Body of pancreas (tissue), 4 donors: ENCODE measurements at regions of chr17 and their contacts with region 1.

Region 1: DNA sequence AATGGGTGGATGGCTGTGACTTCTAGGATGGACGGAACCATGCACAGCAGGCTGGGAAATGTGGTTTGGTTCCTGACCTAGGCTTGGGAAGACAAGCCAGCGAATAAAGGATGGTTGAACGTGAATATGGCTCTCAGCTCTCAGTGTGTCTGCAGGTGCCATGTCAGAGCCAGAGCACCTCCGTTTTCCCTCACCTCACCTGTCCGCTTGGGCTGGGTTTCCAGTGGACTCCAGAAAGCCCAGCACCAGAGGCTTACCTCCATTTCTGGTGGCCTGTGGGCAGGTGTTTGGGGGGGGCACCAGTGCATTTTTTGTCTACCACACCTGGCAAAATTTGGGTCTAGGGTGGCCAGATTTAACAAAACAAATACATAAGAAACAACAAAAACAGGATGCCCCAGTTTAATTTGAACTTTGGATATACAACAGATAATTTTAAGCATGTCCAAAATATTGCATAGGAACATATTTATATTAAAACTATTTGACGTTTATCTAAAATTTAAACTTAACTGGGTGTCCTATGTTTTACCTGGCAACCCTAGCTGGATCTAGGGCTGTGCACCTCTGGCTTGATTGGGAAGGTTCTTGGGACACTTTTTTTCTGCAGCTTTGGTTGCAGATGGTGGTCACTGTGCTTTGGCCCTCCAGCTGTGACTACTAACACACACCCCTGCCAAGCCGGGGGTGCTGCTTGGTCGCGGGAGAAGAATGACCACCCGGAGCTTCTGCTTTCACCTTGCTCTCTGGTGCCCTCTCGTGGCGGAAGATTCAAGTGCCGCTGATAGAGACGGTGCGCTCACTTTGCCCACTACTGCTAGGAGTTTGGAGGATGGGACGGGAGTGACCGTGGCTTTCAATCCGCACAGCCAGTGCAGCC is 6.3 kb downstream of the SPACA3 start:
- DNase-seq: peak; percentile 81 to 88 (median 84)
- ATAC-seq: peak; percentile 78
- H3K4me3 ChIP-seq: no peak overlapping the region
- H3K27ac ChIP-seq: no peak overlapping the region
- H3K4me1 ChIP-seq: peaks cover 16% of the 10 kb centered on the region
- H3K27me3 ChIP-seq: no peaks in the 10 kb centered on the region
- CTCF ChIP-seq: peak; percentile 80 to 92 (median 87)
- POLR2A ChIP-seq: no peak

Region 2: DNA sequence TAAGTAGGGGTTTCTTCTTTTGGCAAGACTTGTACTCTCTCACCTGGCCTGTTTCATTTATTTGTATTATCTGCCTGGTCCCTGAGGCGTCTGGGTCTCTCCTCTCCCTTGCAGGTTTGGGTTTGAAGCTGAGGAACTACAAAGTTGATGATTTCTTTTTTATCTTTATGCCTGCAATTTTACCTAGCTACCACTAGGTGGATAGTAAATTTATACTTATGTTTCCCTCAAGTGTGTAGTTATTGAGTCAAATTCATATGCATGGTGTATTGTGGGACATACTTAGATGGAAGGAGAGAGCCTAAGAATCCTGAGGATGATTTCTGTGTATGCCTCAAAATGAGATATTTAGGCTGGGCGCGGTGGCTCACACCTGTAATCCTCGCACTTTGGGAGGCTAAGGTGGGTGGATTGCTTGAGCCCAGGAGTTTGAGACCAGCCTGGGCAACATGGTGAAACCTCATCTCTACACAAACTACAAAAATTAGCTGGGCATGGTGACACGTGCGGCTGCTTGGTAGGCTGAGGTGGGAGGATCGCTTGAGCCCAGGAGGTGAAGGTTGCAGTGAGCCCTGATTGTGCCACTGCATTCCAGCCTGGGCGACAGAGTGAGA is 56.5 kb before region 1 on chr17:
- intact Hi-C with region 1: loop called (anchors 10 kb)
- DNase-seq: no peak
- ATAC-seq: no peak
- H3K4me3 ChIP-seq: no peak overlapping the region
- H3K27ac ChIP-seq: no peak overlapping the region
- H3K4me1 ChIP-seq: peaks cover 37% of the 10 kb centered on the region
- H3K27me3 ChIP-seq: no peaks in the 10 kb centered on the region
- CTCF ChIP-seq: peak in 6 of 7 experiments; percentile 30 to 57 (median 45)
- POLR2A ChIP-seq: no peak

Region 3: DNA sequence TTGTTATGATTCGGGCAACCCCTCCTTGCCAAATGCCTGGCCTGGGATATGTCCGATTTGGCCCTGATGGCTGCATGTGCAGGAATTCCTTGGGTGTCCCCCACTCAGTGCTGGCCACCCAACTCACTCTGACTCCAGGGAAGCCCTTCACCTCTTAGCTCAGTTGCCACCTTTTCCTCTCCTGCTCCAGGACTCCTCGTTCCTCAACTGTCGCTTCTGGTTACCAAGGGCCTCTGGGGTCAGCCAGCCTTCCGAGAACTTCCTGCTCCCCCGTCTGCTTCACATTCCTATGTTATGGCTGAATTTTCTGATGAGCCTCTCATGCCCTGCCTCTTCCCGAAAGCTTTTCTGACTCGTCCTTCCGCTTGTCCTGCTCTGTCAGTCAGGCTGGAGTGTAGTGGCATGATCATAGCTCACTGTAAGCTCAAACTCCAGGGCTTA is 57.2 kb after region 1 on chr17:
- intact Hi-C with region 1: no loop called
- DNase-seq: no peak
- ATAC-seq: no peak
- H3K4me3 ChIP-seq: no peak overlapping the region
- H3K27ac ChIP-seq: no peak overlapping the region
- H3K4me1 ChIP-seq: no peaks in the 10 kb centered on the region
- H3K27me3 ChIP-seq: no peaks in the 10 kb centered on the region
- CTCF ChIP-seq: no peak
- POLR2A ChIP-seq: no peak

Region 4: GRCh38 chr17:33583518-33584417 is 585.8 kb after region 1 on chr17:
- intact Hi-C with region 1: no loop called
- DNase-seq: no peak
- ATAC-seq: no peak
- H3K4me3 ChIP-seq: no peak overlapping the region
- H3K27ac ChIP-seq: no peak overlapping the region
- H3K4me1 ChIP-seq: no peaks in the 10 kb centered on the region
- H3K27me3 ChIP-seq: no peaks in the 10 kb centered on the region
- CTCF ChIP-seq: no peak
- POLR2A ChIP-seq: no peak